Posterior cingulate gyrus (tissue), 11 donors: ENCODE measurements at regions of chr22 and their contacts with region 1.

Region 1: GRCh38 chr22:50326959-50327710 is at the start of gene DENND6B:
- DNase-seq: peak; percentile 58 to 97 (median 76)

Region 2: GRCh38 chr22:50276143-50276542 is 51.0 kb before region 1 on chr22:
- intact Hi-C with region 1: loop called (anchors 2 kb)
- DNase-seq: peak; percentile 65 to 98 (median 82)

Region 3: GRCh38 chr22:50308536-50308935 is 18.6 kb before region 1 on chr22:
- intact Hi-C with region 1: loop called (anchors 2 kb)
- DNase-seq: peak in 4 of 10 donors; percentile 50 to 95 (median 54)